CD8-positive, alpha-beta T cell (primary cell): ENCODE measurements at regions of chr3 and their contacts with region 1.

Region 1: GRCh38 chr3:124584552-124585391 is 145.5 kb upstream of the UMPS start:
- DNase-seq: peak in 7 of 9 experiments; percentile 9 to 63 (median 16)
- ATAC-seq: peak; percentile 26
- H3K4me3 ChIP-seq: peak overlapping the region; percentile 22 to 27
- H3K4me3 Mint-ChIP-seq: peak overlapping the region; percentile 69
- H3K27ac ChIP-seq: no peak overlapping the region
- H3K27ac Mint-ChIP-seq: no peak overlapping the region
- H3K4me1 ChIP-seq: peaks cover 14% of the 10 kb centered on the region
- H3K4me1 Mint-ChIP-seq: peaks cover 13% of the 10 kb centered on the region
- H3K27me3 ChIP-seq: peaks cover 0 to 13% of the 10 kb centered on the region in 2 experiments
- H3K27me3 Mint-ChIP-seq: peaks cover 44% of the 10 kb centered on the region
- CTCF ChIP-seq: no peak

Region 2: GRCh38 chr3:124363476-124363875 is 221.3 kb before region 1 on chr3:
- CTCF ChIA-PET with region 1: no interaction called
- POLR2A ChIA-PET with region 1: no interaction called
- intact Hi-C with region 1: no loop called
- DNase-seq: no peak
- ATAC-seq: no peak
- H3K4me3 ChIP-seq: no peak overlapping the region
- H3K4me3 Mint-ChIP-seq: no peak overlapping the region
- H3K27ac ChIP-seq: no peak overlapping the region
- H3K27ac Mint-ChIP-seq: no peak overlapping the region
- H3K4me1 ChIP-seq: no peaks in the 10 kb centered on the region
- H3K4me1 Mint-ChIP-seq: no peaks in the 10 kb centered on the region
- H3K27me3 ChIP-seq: no peaks in the 10 kb centered on the region
- H3K27me3 Mint-ChIP-seq: peaks cover 10% of the 10 kb centered on the region
- CTCF ChIP-seq: no peak

Region 3: DNA sequence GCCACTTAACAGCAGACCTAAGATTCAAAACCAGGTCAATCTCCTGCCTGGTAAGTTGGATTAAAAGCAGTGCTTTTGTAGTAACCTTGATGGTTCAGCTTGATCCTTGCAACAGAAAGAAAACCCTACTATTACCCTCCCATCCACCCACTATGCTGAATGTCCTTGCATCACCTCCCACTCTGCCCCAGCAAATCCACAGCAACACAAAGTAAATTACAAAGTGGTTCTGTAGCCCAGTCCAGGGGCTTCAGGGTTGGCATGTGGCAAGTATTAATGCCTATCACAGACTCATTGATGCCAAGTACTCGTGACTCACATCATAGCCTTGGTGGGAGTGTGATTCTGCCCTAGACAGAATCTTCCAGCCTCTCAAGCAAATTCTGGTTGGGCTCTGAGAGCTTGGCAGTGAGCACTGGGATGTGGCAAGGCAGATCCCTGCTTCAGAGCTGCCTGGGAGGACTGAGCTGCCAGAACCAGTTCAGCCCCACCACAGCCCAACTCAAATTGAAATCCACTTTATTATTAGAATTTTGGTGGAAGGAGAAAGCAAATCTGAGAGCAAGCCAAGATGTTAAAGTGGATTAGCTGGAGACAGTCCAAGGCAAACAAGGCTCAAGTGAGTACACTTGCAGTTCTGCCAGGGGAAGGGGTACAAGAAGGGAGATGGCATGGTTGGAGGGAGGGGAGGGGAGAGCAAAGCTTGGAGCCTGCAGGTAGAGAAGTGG is 80.3 kb before region 1 on chr3:
- CTCF ChIA-PET with region 1: no interaction called
- POLR2A ChIA-PET with region 1: no interaction called
- intact Hi-C with region 1: no loop called
- DNase-seq: no peak
- ATAC-seq: no peak
- H3K4me3 ChIP-seq: no peak overlapping the region
- H3K4me3 Mint-ChIP-seq: no peak overlapping the region
- H3K27ac ChIP-seq: no peak overlapping the region
- H3K27ac Mint-ChIP-seq: no peak overlapping the region
- H3K4me1 ChIP-seq: no peaks in the 10 kb centered on the region
- H3K4me1 Mint-ChIP-seq: no peaks in the 10 kb centered on the region
- H3K27me3 ChIP-seq: peaks cover 3 to 4% of the 10 kb centered on the region in 2 experiments
- H3K27me3 Mint-ChIP-seq: peaks cover 18% of the 10 kb centered on the region
- CTCF ChIP-seq: no peak

Region 4: DNA sequence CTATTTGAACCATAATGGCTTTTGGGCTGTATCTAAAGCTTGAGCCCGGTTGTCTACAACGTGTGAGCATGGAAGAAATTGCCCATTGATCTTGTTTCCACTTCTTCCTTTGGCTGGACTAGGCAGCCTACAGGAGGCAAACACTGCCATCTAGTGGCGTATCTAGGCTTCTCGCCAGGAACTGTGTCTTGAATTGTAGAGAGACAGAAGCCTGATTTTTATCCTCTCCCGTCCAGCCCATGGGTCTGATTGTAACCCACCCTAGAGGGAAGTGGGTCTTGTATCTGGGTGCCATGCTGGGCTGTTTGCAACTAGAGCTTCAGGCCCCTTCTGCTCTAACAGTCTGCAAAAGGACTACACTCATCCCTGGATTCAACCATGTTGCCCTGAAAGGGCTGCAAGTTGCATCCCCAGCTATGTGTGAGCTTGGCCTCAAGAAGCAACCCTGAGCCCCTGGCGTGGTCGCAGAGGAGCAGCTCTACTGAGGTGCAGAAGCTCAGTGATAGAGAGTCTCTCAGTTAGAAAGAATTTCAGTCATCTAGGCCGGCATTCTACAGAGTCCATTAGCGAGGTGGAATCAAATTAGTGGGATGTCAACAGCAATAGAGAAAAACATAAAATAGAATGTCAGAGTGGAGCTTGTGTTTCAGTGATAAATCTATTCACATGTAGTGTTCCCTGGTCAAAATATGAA is 24.7 kb before region 1 on chr3:
- CTCF ChIA-PET with region 1: interaction called, 11 read pairs
- POLR2A ChIA-PET with region 1: no interaction called
- intact Hi-C with region 1: no loop called
- DNase-seq: peak in 8 of 9 experiments; percentile 10 to 65 (median 56)
- ATAC-seq: peak; percentile 40
- H3K4me3 ChIP-seq: no peak overlapping the region
- H3K4me3 Mint-ChIP-seq: no peak overlapping the region
- H3K27ac ChIP-seq: no peak overlapping the region
- H3K27ac Mint-ChIP-seq: no peak overlapping the region
- H3K4me1 ChIP-seq: no peaks in the 10 kb centered on the region
- H3K4me1 Mint-ChIP-seq: no peaks in the 10 kb centered on the region
- H3K27me3 ChIP-seq: peaks cover 0 to 3% of the 10 kb centered on the region in 2 experiments
- H3K27me3 Mint-ChIP-seq: peaks cover 37% of the 10 kb centered on the region
- CTCF ChIP-seq: peak; percentile 76

Region 5: DNA sequence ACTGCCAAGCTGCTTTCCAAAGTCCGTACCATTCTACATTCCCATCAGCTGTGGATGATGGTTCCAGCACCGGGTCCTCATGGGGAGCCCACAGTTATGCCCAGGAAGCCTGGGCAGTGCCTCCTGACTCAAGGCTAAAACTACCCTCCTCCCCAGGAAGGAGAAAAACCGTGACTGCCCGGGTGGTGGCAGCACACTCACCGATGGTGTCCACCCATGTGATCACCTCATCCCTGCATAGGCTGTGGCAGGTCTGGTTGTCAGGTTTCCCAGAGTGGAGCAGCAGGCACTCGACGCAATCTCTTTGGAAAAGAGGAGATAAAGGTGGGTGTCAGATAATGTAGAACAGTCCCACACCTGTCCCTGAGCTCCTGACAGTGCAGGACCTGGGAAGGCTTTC is 184.0 kb after region 1 on chr3:
- CTCF ChIA-PET with region 1: no interaction called
- POLR2A ChIA-PET with region 1: no interaction called
- intact Hi-C with region 1: no loop called
- DNase-seq: peak in 1 of 9 experiments; percentile 16
- ATAC-seq: no peak
- H3K4me3 ChIP-seq: no peak overlapping the region
- H3K4me3 Mint-ChIP-seq: no peak overlapping the region
- H3K27ac ChIP-seq: no peak overlapping the region
- H3K27ac Mint-ChIP-seq: no peak overlapping the region
- H3K4me1 ChIP-seq: no peaks in the 10 kb centered on the region
- H3K4me1 Mint-ChIP-seq: no peaks in the 10 kb centered on the region
- H3K27me3 ChIP-seq: peaks cover 0 to 4% of the 10 kb centered on the region in 2 experiments
- H3K27me3 Mint-ChIP-seq: peaks cover 12% of the 10 kb centered on the region
- CTCF ChIP-seq: no peak

Region 6: DNA sequence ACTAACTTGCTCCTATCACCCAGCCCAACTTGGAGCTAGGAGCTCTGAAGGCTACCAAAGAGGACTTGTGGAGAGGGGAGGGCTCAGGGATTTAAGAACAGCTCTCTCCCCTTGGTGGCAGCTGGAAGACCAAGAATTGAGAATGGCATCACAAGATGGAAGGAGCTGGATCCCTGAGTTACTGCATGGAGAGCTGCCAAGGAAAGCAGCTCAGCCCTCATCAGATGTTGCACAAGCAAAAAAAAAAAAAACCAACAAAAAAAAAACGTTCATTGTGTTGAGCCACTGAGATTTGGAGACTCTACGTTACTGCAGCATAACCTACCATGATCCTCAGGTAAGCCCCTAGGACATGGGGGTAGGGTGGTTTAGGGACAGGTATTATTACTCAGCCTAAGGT is 261.4 kb after region 1 on chr3:
- CTCF ChIA-PET with region 1: no interaction called
- POLR2A ChIA-PET with region 1: no interaction called
- intact Hi-C with region 1: no loop called
- DNase-seq: no peak
- ATAC-seq: no peak
- H3K4me3 ChIP-seq: no peak overlapping the region
- H3K4me3 Mint-ChIP-seq: no peak overlapping the region
- H3K27ac ChIP-seq: no peak overlapping the region
- H3K27ac Mint-ChIP-seq: no peak overlapping the region
- H3K4me1 ChIP-seq: no peaks in the 10 kb centered on the region
- H3K4me1 Mint-ChIP-seq: no peaks in the 10 kb centered on the region
- H3K27me3 ChIP-seq: no peaks in the 10 kb centered on the region
- H3K27me3 Mint-ChIP-seq: peaks cover 2% of the 10 kb centered on the region
- CTCF ChIP-seq: no peak